Activated T-helper 1 cell treated with anti-CD3 and anti-CD28 coated beads, Interleukin-12 subunit alpha, Interleukin-12 subunit beta, Interleukin-2, Interleukin-4 antibody, amounts not matched to agents 30 ng/mL and 10 ng/mL and 1 ng/mL, durations not matched to agents 14 hours and 24 hours and 36 hours (primary cell): ENCODE measurements at regions of chr16 and their contacts with region 1.

Region 1: GRCh38 chr16:740764-741505 is at the start of gene CIAO3:
- DNase-seq: peak; percentile 92
- H3K4me3 Mint-ChIP-seq: peak within 1 kb of the TSS; percentile 85
- H3K27ac Mint-ChIP-seq: peak within 1 kb of the TSS; percentile 73
- H3K4me1 Mint-ChIP-seq: peaks cover 9% of the 10 kb centered on the region
- H3K27me3 Mint-ChIP-seq: no peaks in the 10 kb centered on the region
- total RNA-seq, gene CIAO3: 41.0 and 43.1 TPM in 2 replicates

Region 2: GRCh38 chr16:695355-696089 is 45.4 kb before region 1 on chr16:
- intact Hi-C with region 1: loop called (anchors 5 kb)
- DNase-seq: peak; percentile 66
- H3K4me3 Mint-ChIP-seq: peak overlapping the region; percentile 80
- H3K27ac Mint-ChIP-seq: peak overlapping the region; percentile 74
- H3K4me1 Mint-ChIP-seq: peaks cover 13% of the 10 kb centered on the region
- H3K27me3 Mint-ChIP-seq: peaks cover 13% of the 10 kb centered on the region

Region 3: DNA sequence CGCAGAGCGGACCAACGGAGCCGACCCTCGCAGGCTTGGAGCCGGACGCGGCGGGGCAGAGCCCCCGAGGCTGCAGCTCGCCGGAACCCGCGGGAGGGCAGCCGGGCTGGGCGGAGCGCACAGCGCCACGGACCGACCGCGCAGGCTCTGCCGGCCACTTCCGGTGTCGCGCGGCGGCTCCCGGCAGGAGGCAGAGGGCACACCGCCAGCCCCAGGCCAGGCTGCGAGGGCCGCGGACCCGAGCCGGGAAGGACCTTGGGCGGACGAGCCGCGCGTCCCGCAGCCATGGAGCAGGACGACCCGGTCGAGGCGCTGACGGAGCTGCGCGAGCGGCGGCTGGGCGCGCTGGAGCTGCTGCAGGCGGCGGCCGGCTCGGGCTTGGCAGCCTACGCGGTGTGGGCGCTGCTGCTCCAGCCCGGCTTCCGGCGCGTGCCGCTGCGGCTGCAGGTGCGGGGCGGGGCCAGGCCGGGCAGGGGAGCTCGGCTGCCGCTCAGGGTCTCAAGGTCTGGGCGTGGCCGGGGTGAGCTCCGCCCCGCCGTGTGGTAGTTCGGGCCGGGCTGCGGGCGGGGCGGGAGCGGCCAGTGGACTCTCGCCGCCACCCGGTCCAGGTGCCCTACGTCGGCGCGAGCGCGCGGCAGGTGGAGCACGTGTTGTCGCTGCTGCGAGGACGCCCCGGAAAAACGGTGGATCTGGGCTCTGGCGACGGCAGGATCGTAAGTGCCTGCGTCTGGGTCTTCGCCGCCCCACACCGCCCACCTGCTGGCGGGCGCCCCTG is 19.8 kb before region 1 on chr16 and contains the start of gene ANTKMT:
- intact Hi-C with region 1: loop called (anchors 2 kb)
- DNase-seq: peak; percentile 58
- H3K4me3 Mint-ChIP-seq: peak within 1 kb of the TSS; percentile 75
- H3K27ac Mint-ChIP-seq: peak within 1 kb of the TSS; percentile 28
- H3K4me1 Mint-ChIP-seq: no peaks in the 10 kb centered on the region
- H3K27me3 Mint-ChIP-seq: peaks cover 11% of the 10 kb centered on the region
- total RNA-seq, gene ANTKMT: 41.3 and 41.6 TPM in 2 replicates

Region 4: DNA sequence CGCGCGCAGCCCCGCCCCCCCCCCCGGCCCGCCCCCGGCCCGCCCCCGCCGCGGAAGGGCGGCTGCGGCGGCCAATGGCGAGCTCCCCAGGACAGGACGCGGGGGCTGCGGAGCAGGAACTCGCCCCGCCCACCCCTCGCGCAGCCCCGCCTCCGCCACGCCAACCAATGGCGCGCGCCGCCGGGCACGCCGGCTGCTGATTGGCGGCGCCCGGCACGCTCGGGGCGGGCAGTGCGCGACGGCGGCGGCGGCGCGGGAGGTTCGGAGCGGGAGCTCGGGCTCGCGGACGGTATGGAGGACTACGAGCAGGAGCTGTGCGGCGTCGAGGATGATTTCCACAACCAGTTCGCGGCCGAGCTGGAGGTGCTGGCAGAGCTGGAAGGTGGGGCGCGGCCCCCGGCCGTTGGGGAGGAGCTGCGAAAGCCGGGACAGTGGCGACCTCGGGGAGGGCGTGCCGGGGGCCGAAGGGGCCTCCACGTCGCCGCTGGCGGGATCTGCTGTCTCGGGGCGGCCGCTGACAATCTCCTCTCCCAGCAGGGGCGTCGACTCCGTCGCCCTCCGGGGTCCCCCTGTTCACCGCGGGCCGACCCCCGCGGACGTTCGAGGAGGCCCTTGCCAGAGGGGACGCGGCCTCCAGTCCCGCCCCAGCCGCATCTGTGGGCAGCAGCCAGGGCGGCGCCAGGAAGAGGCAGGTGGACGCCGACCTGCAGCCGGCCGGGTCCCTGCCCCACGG is 47.6 kb after region 1 on chr16 and contains the start of gene CHTF18:
- intact Hi-C with region 1: loop called (anchors 5 kb)
- DNase-seq: peak; percentile 92
- H3K4me3 Mint-ChIP-seq: peak within 1 kb of the TSS; percentile 92
- H3K27ac Mint-ChIP-seq: peak within 1 kb of the TSS; percentile 79
- H3K4me1 Mint-ChIP-seq: no peaks in the 10 kb centered on the region
- H3K27me3 Mint-ChIP-seq: no peaks in the 10 kb centered on the region
- total RNA-seq, gene CHTF18: 142 and 154 TPM in 2 replicates